ENCODE measurements at regions of chr14 and their contacts with region 1.

Region 1: GRCh38 chr14:36655963-36656686 is 5.5 kb upstream of the PAX9 start:
- DNase-seq: peak; percentile 62
- H3K4me3 Mint-ChIP-seq: no peak overlapping the region
- H3K27ac Mint-ChIP-seq: no peak overlapping the region
- H3K4me1 Mint-ChIP-seq: peaks cover 27% of the 10 kb centered on the region
- H3K27me3 Mint-ChIP-seq: peaks cover 82% of the 10 kb centered on the region

Region 2: GRCh38 chr14:36513451-36514277 is 142.5 kb before region 1 on chr14:
- CTCF ChIA-PET with region 1: interaction called, 4 read pairs
- intact Hi-C with region 1: loop called (anchors 2 kb)
- DNase-seq: no peak
- H3K4me3 Mint-ChIP-seq: no peak overlapping the region
- H3K27ac Mint-ChIP-seq: no peak overlapping the region
- H3K4me1 Mint-ChIP-seq: peaks cover 5% of the 10 kb centered on the region
- H3K27me3 Mint-ChIP-seq: peaks cover 72% of the 10 kb centered on the region

Region 3: GRCh38 chr14:36538051-36538450 is 118.1 kb before region 1 on chr14:
- CTCF ChIA-PET with region 1: no interaction called
- intact Hi-C with region 1: no loop called
- DNase-seq: no peak
- H3K4me3 Mint-ChIP-seq: no peak overlapping the region
- H3K27ac Mint-ChIP-seq: no peak overlapping the region
- H3K4me1 Mint-ChIP-seq: no peaks in the 10 kb centered on the region
- H3K27me3 Mint-ChIP-seq: peaks cover 26% of the 10 kb centered on the region

Region 4: GRCh38 chr14:36582011-36582873 is 73.9 kb before region 1 on chr14 and contains the start of gene NKX2-8:
- CTCF ChIA-PET with region 1: no interaction called
- intact Hi-C with region 1: loop called (anchors 2 kb)
- DNase-seq: no peak
- H3K4me3 Mint-ChIP-seq: no peak within 1 kb of the TSS
- H3K27ac Mint-ChIP-seq: no peak within 1 kb of the TSS
- H3K4me1 Mint-ChIP-seq: peaks cover 2% of the 10 kb centered on the region
- H3K27me3 Mint-ChIP-seq: peaks cover 76% of the 10 kb centered on the region
- total RNA-seq, gene NKX2-8: not detected